IMR-90 (cell line): ENCODE measurements at regions of chr4 and their contacts with region 1.

Region 1: GRCh38 chr4:84258905-84259830 is 239.9 kb downstream of the NKX6-1 start:
- DNase-seq: peak; percentile 32
- ATAC-seq: peak; percentile 62; the same call in 1 of the 2 replicates
- H3K4me3 ChIP-seq: no peak overlapping the region
- H3K27ac ChIP-seq: no peak overlapping the region
- H3K4me1 ChIP-seq: no peaks in the 10 kb centered on the region
- H3K27me3 ChIP-seq: no peaks in the 10 kb centered on the region
- CTCF ChIP-seq: peak; percentile 74
- POLR2A ChIP-seq: no peak
- RAD21 ChIP-seq: peak; percentile 68

Region 2: DNA sequence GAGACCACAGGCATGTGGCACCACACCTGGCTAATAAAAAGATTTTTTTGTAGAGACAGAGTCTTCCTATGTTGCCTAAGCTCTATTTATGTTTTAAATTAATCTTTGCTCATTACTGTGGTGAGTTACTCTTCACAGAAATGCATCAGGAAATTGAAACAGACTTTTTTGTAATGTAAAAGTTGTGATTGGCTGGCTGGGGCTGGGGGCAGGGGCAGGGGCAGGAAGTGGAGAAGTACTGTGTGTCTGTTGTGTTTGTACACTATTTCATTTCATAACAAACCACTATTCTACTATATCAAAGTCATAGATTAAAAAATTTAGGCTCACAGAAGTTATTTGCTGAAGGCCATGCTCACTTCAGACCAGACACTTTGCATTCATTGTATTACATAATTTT is 755.2 kb before region 1 on chr4:
- CTCF ChIA-PET with region 1: no interaction called
- POLR2A ChIA-PET with region 1: no interaction called
- dilution Hi-C with region 1: no loop called
- in situ Hi-C with region 1: loop called (anchors 25 kb)
- intact Hi-C with region 1: loop called (anchors 5 kb)
- DNase-seq: no peak
- ATAC-seq: no peak
- H3K4me3 ChIP-seq: no peak overlapping the region
- H3K27ac ChIP-seq: no peak overlapping the region
- H3K4me1 ChIP-seq: no peaks in the 10 kb centered on the region
- H3K27me3 ChIP-seq: peaks cover 4% of the 10 kb centered on the region
- CTCF ChIP-seq: no peak
- POLR2A ChIP-seq: no peak
- RAD21 ChIP-seq: no peak

Region 3: GRCh38 chr4:83516042-83516772 is 743.0 kb before region 1 on chr4:
- CTCF ChIA-PET with region 1: no interaction called
- POLR2A ChIA-PET with region 1: no interaction called
- dilution Hi-C with region 1: no loop called
- in situ Hi-C with region 1: loop called (anchors 25 kb)
- intact Hi-C with region 1: no loop called
- DNase-seq: peak; percentile 80
- ATAC-seq: peak; percentile 72
- H3K4me3 ChIP-seq: no peak overlapping the region
- H3K27ac ChIP-seq: no peak overlapping the region
- H3K4me1 ChIP-seq: no peaks in the 10 kb centered on the region
- H3K27me3 ChIP-seq: no peaks in the 10 kb centered on the region; the same call in 1 of the 2 replicates
- CTCF ChIP-seq: no peak
- POLR2A ChIP-seq: no peak
- RAD21 ChIP-seq: no peak

Region 4: DNA sequence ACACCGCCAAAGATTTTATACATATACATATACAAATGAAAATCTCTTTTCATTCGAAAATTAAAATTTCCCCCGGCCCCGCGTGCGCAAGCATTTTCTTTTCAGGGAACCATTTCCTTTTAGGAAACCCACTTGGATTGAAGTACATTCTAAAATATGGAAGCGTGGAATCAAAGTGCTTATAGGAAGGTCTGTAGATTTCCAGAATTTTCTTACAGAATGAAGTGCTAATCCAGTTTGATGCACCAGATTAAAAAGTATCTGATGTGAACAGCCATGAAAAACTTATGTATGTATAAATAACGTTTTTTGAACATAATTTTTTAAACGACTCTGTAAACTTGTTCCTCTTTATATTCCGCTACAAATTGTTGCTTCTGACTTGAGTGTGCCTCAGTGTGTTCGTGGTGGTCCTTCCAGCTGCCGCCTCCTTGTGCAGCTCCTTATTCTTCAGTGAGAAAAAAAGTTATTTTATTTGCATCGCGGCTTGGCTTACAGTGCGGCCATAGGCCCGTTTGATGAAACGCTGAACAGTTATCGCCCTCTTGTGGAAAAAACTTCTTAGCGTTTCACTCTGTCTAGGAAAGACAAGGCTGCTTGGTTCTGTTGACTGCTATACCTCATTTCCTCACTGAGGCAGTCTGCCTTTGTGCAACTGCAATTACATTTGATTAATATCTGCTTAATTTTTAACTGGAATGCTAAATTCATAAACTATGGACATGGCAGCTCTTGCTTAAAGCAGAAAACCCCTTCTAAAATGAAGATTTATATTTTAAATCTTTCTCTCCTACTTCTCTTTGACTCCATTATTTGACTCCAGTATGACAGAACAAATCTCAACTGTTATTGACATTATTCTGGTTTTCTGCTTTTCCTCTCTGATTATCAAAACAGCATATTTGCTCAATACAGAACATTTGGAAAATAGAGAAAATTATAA is 244.6 kb after region 1 on chr4:
- CTCF ChIA-PET with region 1: no interaction called
- POLR2A ChIA-PET with region 1: no interaction called
- dilution Hi-C with region 1: no loop called
- in situ Hi-C with region 1: no loop called
- intact Hi-C with region 1: loop called (anchors 10 kb)
- DNase-seq: peak; percentile 66
- ATAC-seq: peak; percentile 89
- H3K4me3 ChIP-seq: no peak overlapping the region
- H3K27ac ChIP-seq: no peak overlapping the region
- H3K4me1 ChIP-seq: no peaks in the 10 kb centered on the region
- H3K27me3 ChIP-seq: peaks cover 52% of the 10 kb centered on the region
- CTCF ChIP-seq: peak; percentile 72
- POLR2A ChIP-seq: no peak
- RAD21 ChIP-seq: peak; percentile 75

Region 5: GRCh38 chr4:84515075-84515474 is 255.9 kb after region 1 on chr4:
- CTCF ChIA-PET with region 1: no interaction called
- POLR2A ChIA-PET with region 1: no interaction called
- dilution Hi-C with region 1: no loop called
- in situ Hi-C with region 1: no loop called
- intact Hi-C with region 1: no loop called
- DNase-seq: no peak
- ATAC-seq: no peak
- H3K4me3 ChIP-seq: no peak overlapping the region
- H3K27ac ChIP-seq: no peak overlapping the region
- H3K4me1 ChIP-seq: no peaks in the 10 kb centered on the region
- H3K27me3 ChIP-seq: no peaks in the 10 kb centered on the region; the same call in 1 of the 2 replicates
- CTCF ChIP-seq: no peak
- POLR2A ChIP-seq: no peak
- RAD21 ChIP-seq: no peak